Naive thymus-derived CD4-positive, alpha-beta T cell (primary cell): ENCODE measurements at regions of chr15 and their contacts with region 1.

Region 1: GRCh38 chr15:64430000-64430735 is 30.2 kb upstream of the ZNF609 start:
- DNase-seq: peak in 8 of 9 donors; percentile 29 to 89 (median 81)
- ATAC-seq: peak; percentile 95
- H3K4me3 ChIP-seq: peak overlapping the region; percentile 15
- H3K4me3 Mint-ChIP-seq: peak overlapping the region; percentile 25 to 85 (median 80)
- H3K27ac ChIP-seq: peak overlapping the region; percentile 59
- H3K27ac Mint-ChIP-seq: peak overlapping the region; percentile 78 to 98 (median 93)
- H3K4me1 ChIP-seq: peaks cover 24 to 53% of the 10 kb centered on the region in 2 donors
- H3K4me1 Mint-ChIP-seq: peaks cover 25 to 66% (median 57%) of the 10 kb centered on the region in 7 donors
- H3K27me3 ChIP-seq: no peaks in the 10 kb centered on the region
- H3K27me3 Mint-ChIP-seq: no peaks in the 10 kb centered on the region

Region 2: GRCh38 chr15:64443747-64444621 is 13.8 kb after region 1 on chr15:
- CTCF ChIA-PET with region 1: interaction called, 4 read pairs
- POLR2A ChIA-PET with region 1: no interaction called
- intact Hi-C with region 1: loop called in 1 of 2 experiments (anchors 2 kb)
- DNase-seq: peak in 1 of 9 donors; percentile 32
- ATAC-seq: no peak
- H3K4me3 ChIP-seq: no peak overlapping the region
- H3K4me3 Mint-ChIP-seq: peak overlapping the region in 9 of 10 donors; percentile 1 to 77 (median 59)
- H3K27ac ChIP-seq: peak overlapping the region; percentile 37
- H3K27ac Mint-ChIP-seq: peak overlapping the region; percentile 24 to 90 (median 82)
- H3K4me1 ChIP-seq: peaks cover 17 to 36% of the 10 kb centered on the region in 2 donors
- H3K4me1 Mint-ChIP-seq: peaks cover 28 to 79% (median 66%) of the 10 kb centered on the region in 7 donors
- H3K27me3 ChIP-seq: no peaks in the 10 kb centered on the region
- H3K27me3 Mint-ChIP-seq: no peaks in the 10 kb centered on the region

Region 3: DNA sequence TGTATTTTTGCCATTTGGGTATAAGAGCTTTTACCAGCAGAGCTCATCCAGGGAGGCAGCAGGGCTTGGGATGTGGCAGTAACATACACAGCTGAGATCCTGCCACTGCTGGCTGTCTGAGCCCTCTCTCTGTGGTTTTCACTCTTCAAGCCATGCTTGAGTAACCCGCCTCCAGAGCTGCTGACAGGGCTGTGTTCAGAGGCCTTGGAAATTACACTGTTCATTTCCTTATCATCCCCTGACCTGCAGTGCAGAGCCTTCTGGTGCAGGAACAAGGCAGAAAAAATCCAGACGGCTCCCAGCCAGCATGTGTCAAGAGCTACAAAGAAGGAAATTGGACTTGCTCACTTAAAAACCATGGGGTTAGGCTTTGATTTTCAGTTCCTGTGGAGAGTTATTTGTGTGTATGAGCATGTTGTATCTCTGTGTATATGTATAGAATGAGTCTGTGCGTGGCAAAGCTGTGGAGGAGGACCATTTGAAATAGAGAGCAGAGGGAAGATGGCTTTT is 77.2 kb after region 1 on chr15:
- CTCF ChIA-PET with region 1: interaction called, 4 read pairs
- POLR2A ChIA-PET with region 1: interaction called, 9 read pairs
- intact Hi-C with region 1: loop called in 1 of 2 experiments (anchors 2 kb)
- DNase-seq: peak in 8 of 9 donors; percentile 14 to 46 (median 31)
- ATAC-seq: peak; percentile 76
- H3K4me3 ChIP-seq: peak overlapping the region; percentile 15
- H3K4me3 Mint-ChIP-seq: peak overlapping the region; percentile 25 to 79 (median 65)
- H3K27ac ChIP-seq: peak overlapping the region; percentile 46
- H3K27ac Mint-ChIP-seq: peak overlapping the region; percentile 43 to 97 (median 85)
- H3K4me1 ChIP-seq: peaks cover 27 to 88% of the 10 kb centered on the region in 2 donors
- H3K4me1 Mint-ChIP-seq: peaks cover 37 to 93% (median 81%) of the 10 kb centered on the region in 7 donors
- H3K27me3 ChIP-seq: no peaks in the 10 kb centered on the region
- H3K27me3 Mint-ChIP-seq: no peaks in the 10 kb centered on the region

Region 4: DNA sequence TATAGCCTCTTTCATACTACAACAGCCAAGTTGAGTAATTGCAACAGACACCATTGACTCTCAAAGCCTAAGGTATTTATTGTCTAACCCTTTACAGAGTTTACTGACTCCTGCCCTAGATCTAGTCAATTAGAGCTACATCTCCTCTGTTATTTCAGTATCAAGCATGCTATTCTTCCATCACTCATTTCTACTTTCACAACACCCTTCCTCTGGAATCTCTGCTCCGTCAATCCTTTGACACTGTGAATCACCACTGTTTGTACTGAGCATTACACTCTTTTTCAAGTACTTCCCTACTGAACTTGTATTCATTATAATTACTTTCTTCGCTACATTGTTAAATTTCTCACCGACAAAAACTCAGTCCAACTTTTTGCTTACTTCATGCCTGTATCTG is 152.0 kb after region 1 on chr15:
- CTCF ChIA-PET with region 1: no interaction called
- POLR2A ChIA-PET with region 1: no interaction called
- intact Hi-C with region 1: loop called in 1 of 2 experiments (anchors 5 kb)
- DNase-seq: no peak
- ATAC-seq: peak; percentile 41
- H3K4me3 ChIP-seq: no peak overlapping the region
- H3K4me3 Mint-ChIP-seq: peak overlapping the region in 8 of 10 donors; percentile 2 to 86 (median 28)
- H3K27ac ChIP-seq: no peak overlapping the region
- H3K27ac Mint-ChIP-seq: peak overlapping the region in 8 of 9 donors; percentile 4 to 93 (median 68)
- H3K4me1 ChIP-seq: peaks cover 0 to 28% of the 10 kb centered on the region in 2 donors
- H3K4me1 Mint-ChIP-seq: peaks cover 35 to 75% (median 65%) of the 10 kb centered on the region in 7 donors
- H3K27me3 ChIP-seq: no peaks in the 10 kb centered on the region
- H3K27me3 Mint-ChIP-seq: no peaks in the 10 kb centered on the region

Region 5: DNA sequence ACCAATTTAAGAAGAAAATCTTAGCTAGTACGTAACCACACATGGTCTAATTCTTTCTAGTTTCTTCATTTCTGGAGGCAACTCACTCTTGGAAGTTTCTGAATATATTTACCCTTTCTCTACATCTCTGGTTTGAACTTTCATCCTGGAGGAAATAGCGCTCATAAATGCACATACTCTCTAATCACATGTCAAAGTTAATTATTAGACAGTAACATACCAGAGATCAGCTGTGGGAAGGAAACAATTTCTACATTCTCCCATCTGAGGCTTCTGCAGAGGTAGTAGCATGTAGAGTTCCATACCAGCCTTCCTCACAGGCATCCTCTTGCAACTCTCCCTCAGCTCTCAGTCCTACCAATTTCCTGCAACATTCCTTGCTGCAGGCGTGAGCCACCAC is 212.7 kb after region 1 on chr15:
- CTCF ChIA-PET with region 1: interaction called, 10 read pairs
- POLR2A ChIA-PET with region 1: no interaction called
- intact Hi-C with region 1: no loop called
- DNase-seq: no peak
- ATAC-seq: no peak
- H3K4me3 ChIP-seq: no peak overlapping the region
- H3K4me3 Mint-ChIP-seq: no peak overlapping the region
- H3K27ac ChIP-seq: no peak overlapping the region
- H3K27ac Mint-ChIP-seq: peak overlapping the region in 1 of 9 donors; percentile 17
- H3K4me1 ChIP-seq: peaks cover 22 to 28% of the 10 kb centered on the region in 2 donors
- H3K4me1 Mint-ChIP-seq: peaks cover 27 to 80% (median 55%) of the 10 kb centered on the region in 7 donors
- H3K27me3 ChIP-seq: no peaks in the 10 kb centered on the region
- H3K27me3 Mint-ChIP-seq: no peaks in the 10 kb centered on the region

Region 6: DNA sequence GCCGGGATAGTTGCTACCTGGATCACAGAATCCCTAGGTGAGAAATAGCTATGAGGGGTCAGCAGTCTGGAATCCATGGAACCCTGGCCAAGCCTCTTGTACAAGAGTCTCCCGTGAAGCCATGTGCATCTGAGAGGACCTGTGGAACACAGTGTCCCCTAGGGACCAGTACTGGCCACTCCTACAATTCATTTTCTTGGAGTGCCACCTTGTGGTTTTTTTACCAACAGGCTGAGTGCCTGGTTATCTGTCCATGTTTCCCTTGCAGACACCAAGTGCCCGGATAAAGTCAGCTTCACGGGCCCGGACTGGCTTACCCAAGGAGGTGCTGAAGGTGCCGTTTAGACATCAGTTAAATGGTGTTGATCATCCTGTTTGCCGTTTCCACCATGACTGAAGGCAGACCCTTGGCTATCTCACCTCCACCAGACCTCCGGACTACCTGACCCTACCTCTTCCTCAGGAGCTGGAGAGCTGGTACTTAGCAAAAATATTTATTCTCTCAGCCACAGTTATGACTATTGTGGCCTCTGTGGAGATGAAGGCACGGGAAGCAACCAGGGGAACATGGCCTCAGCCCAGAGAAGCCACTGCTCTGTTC is 251.4 kb after region 1 on chr15:
- CTCF ChIA-PET with region 1: interaction called, 10 read pairs
- POLR2A ChIA-PET with region 1: interaction called, 3 read pairs
- intact Hi-C with region 1: loop called in 1 of 2 experiments (anchors 1 kb)
- DNase-seq: no peak
- ATAC-seq: peak; percentile 46
- H3K4me3 ChIP-seq: no peak overlapping the region
- H3K4me3 Mint-ChIP-seq: peak overlapping the region in 1 of 10 donors; percentile 53
- H3K27ac ChIP-seq: no peak overlapping the region
- H3K27ac Mint-ChIP-seq: peak overlapping the region in 6 of 9 donors; percentile 34 to 78 (median 61)
- H3K4me1 ChIP-seq: no peaks in the 10 kb centered on the region
- H3K4me1 Mint-ChIP-seq: peaks cover 0 to 31% (median 4%) of the 10 kb centered on the region in 7 donors
- H3K27me3 ChIP-seq: no peaks in the 10 kb centered on the region
- H3K27me3 Mint-ChIP-seq: no peaks in the 10 kb centered on the region